MCF 10A (cell line): ENCODE measurements at regions of chr17 and their contacts with region 1.

Region 1: GRCh38 chr17:45218895-45219661 is 2.6 kb upstream of the FMNL1 start:
- DNase-seq: peak; percentile 86
- H3K4me3 Mint-ChIP-seq: no peak overlapping the region
- H3K27ac Mint-ChIP-seq: no peak overlapping the region
- H3K4me1 Mint-ChIP-seq: peaks cover 11% of the 10 kb centered on the region
- H3K27me3 Mint-ChIP-seq: no peaks in the 10 kb centered on the region
- CTCF ChIP-seq: peak; percentile 95

Region 2: DNA sequence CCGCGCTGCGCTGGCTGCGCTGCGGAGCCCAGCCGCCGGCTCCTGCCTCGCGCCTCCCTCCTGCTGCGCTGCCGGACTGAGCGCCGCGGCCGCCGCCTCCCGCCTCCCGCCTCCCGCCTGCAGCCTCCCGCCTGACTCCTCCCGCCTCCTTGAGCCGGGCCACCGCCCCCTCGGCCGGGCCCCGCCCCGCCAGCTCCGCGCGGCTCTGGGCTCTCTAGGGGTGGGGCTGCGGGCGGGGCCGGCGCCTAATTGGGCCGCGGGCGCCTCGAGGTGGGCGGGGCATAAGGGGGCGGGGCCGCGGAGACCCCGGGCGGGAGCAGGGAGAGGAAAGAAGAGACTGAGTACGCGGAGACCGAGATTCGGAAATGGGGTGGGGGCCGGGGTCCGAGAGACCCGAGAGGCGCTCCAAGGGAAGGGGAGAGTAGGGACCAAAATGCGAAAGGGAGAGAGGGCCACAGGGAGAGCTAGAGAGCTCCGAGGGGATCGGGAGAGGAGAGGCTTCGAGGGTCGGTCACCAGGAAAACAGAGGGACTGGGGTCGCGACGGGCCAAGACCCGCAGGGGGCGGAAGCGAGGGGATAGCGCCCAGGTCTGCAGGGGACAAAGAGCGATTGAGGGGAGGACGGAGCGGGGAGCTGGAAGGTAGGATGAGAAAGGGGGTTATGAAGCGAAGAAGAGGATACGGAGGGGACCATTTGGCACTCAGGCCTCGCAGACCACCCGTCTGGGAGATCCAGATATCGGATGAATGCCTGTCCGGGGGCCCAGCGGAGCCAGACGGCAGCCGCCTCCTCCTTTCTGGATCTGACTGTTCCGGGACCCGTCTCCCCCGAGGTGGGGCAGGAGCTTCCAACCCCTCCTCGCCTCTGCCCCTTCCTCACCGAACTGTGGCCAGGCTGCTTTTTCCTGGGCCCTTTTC is 250.6 kb before region 1 on chr17 and contains the start of gene C1QL1:
- CTCF ChIA-PET with region 1: no interaction called
- POLR2A ChIA-PET with region 1: no interaction called
- intact Hi-C with region 1: no loop called
- DNase-seq: peak; percentile 92
- H3K4me3 Mint-ChIP-seq: peak within 1 kb of the TSS; percentile 76
- H3K27ac Mint-ChIP-seq: no peak within 1 kb of the TSS
- H3K4me1 Mint-ChIP-seq: peaks cover 30% of the 10 kb centered on the region
- H3K27me3 Mint-ChIP-seq: no peaks in the 10 kb centered on the region
- CTCF ChIP-seq: no peak
- total RNA-seq, gene C1QL1: 0.56 and 0.96 TPM in 2 replicates

Region 3: DNA sequence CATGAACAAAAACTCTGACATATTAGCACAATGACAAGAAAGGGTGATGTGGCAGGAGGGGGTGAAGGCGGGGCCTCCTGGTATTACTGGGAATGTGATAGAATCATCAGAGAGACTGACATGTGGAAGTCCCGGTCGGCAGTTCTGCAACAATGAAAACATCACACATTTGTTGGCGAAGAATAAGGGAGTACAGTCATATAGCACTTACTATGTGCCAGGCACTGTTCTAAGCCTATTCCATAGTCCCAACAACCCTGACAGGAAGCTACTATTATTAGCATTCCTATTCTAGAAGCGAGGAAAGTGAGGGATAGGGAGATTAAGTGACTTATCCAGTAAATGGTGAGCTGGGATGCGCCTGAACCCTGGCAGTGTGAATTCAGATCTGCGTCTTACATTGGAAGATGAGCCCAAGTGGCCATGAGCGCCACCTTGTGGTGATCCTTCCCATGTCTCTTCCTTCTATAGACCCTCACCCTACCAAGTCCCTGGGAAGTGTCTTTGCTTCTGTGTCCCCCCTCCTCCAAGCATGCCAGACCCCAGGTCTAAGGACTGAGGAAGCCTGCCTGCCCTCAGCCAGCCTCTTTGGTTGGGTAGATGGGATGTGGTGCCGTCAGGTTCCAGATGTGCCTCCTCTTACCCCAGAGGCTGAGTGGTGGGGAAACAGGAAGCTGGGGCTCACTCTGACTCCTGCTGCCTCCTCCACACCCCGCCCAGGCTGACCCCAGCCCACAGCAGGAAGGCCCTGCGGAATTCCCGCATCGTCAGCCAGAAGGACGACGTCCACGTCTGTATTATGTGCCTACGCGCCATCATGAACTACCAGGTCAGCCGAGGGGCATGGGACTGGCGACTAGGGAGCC is 16.6 kb after region 1 on chr17:
- CTCF ChIA-PET with region 1: interaction called, 49 read pairs
- POLR2A ChIA-PET with region 1: interaction called, 13 read pairs
- intact Hi-C with region 1: loop called (anchors 1 kb)
- DNase-seq: peak; percentile 82
- H3K4me3 Mint-ChIP-seq: no peak overlapping the region
- H3K27ac Mint-ChIP-seq: no peak overlapping the region
- H3K4me1 Mint-ChIP-seq: peaks cover under 1% of the 10 kb centered on the region
- H3K27me3 Mint-ChIP-seq: no peaks in the 10 kb centered on the region
- CTCF ChIP-seq: peak; percentile 78

Region 4: DNA sequence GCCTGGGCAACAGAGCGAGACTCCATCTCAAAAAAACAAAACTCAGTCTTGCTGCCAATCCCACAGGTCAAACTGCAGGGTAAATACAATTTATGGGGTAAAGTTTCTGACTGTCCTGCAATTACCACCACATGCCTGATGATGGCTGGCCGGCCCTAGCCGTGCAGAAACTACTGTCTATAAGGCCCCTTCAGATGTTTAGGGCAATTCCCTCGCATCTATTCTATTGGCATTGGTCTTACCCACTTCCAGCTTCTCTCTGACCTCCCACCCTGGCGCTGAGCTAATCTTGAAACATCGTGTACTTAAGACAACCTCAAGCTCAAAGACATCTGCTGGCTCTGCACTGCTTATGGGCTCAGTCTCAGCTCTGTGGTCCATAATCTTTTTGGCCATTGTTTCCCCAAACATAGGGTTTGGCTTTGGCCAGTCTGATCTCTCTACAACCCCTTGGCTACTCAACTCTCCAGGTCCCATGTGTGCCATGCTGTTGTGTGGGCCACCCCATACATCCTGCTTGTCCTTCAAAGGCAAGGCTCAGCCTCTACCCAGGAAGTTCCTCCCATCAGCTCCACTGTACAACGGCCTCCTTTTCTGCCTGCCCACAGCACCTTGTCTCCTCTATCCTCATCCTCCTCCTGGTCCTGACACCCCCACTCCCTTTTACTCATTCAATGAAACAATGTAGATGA is 81.1 kb after region 1 on chr17:
- CTCF ChIA-PET with region 1: no interaction called
- POLR2A ChIA-PET with region 1: no interaction called
- intact Hi-C with region 1: no loop called
- DNase-seq: no peak
- H3K4me3 Mint-ChIP-seq: no peak overlapping the region
- H3K27ac Mint-ChIP-seq: no peak overlapping the region
- H3K4me1 Mint-ChIP-seq: peaks cover 44% of the 10 kb centered on the region
- H3K27me3 Mint-ChIP-seq: no peaks in the 10 kb centered on the region
- CTCF ChIP-seq: no peak

Region 5: GRCh38 chr17:45370949-45371413 is 151.9 kb after region 1 on chr17:
- CTCF ChIA-PET with region 1: no interaction called
- POLR2A ChIA-PET with region 1: no interaction called
- intact Hi-C with region 1: no loop called
- DNase-seq: peak; percentile 65
- H3K4me3 Mint-ChIP-seq: peak overlapping the region; percentile 83
- H3K27ac Mint-ChIP-seq: peak overlapping the region; percentile 95
- H3K4me1 Mint-ChIP-seq: peaks cover 33% of the 10 kb centered on the region
- H3K27me3 Mint-ChIP-seq: no peaks in the 10 kb centered on the region
- CTCF ChIP-seq: no peak